ENCODE measurements at regions of chr14 and their contacts with region 1.

Region 1: DNA sequence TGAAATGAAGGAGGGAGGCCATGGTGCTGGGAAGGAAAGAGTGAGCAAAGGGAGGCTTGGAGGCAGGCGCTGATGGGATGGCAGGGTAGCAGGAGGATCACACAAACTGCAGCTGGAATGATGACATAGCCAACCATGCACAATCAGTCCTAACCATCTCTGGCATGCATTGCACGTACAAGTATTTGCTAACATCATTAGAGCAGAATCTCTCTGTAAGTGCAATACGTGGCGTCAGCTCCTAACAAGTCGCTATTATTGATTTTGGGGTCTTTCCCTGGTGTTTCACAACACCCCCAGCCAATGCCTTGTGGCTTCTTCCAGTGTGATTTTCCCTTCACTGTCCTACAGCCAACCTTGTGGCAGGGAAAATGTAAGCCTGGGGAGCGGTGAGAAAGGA is 18.5 kb downstream of the BDKRB1 start:
- DNase-seq: no peak
- ATAC-seq: no peak
- H3K4me3 ChIP-seq: no peak overlapping the region
- H3K27ac ChIP-seq: no peak overlapping the region
- H3K4me1 ChIP-seq: peaks cover 8% of the 10 kb centered on the region
- H3K27me3 ChIP-seq: no peaks in the 10 kb centered on the region
- CTCF ChIP-seq: no peak

Region 2: GRCh38 chr14:96100161-96101029 is 174.1 kb before region 1 on chr14:
- intact Hi-C with region 1: loop called (anchors 5 kb)
- DNase-seq: peak; percentile 75
- ATAC-seq: peak; percentile 61 to 70
- H3K4me3 ChIP-seq: no peak overlapping the region
- H3K27ac ChIP-seq: no peak overlapping the region
- H3K4me1 ChIP-seq: peaks cover 21% of the 10 kb centered on the region
- H3K27me3 ChIP-seq: no peaks in the 10 kb centered on the region
- CTCF ChIP-seq: peak; percentile 87

Measured in lower lobe of right lung (tissue), 2 donors.